ENCODE measurements at regions of chr5 and their contacts with region 1.

Region 1: GRCh38 chr5:119340597-119341218 is 15.1 kb upstream of the TNFAIP8 start:
- DNase-seq: peak; percentile 26 to 77 (median 61)
- H3K4me3 ChIP-seq: peak overlapping the region; percentile 54
- H3K4me3 Mint-ChIP-seq: peak overlapping the region; percentile 75 to 93 (median 83)
- H3K27ac ChIP-seq: peak overlapping the region; percentile 52
- H3K27ac Mint-ChIP-seq: peak overlapping the region; percentile 84 to 99 (median 94)
- H3K4me1 ChIP-seq: peaks cover 98% of the 10 kb centered on the region
- H3K4me1 Mint-ChIP-seq: peaks cover 95 to 98% (median 98%) of the 10 kb centered on the region in 3 donors
- H3K27me3 ChIP-seq: no peaks in the 10 kb centered on the region
- H3K27me3 Mint-ChIP-seq: no peaks in the 10 kb centered on the region

Region 2: DNA sequence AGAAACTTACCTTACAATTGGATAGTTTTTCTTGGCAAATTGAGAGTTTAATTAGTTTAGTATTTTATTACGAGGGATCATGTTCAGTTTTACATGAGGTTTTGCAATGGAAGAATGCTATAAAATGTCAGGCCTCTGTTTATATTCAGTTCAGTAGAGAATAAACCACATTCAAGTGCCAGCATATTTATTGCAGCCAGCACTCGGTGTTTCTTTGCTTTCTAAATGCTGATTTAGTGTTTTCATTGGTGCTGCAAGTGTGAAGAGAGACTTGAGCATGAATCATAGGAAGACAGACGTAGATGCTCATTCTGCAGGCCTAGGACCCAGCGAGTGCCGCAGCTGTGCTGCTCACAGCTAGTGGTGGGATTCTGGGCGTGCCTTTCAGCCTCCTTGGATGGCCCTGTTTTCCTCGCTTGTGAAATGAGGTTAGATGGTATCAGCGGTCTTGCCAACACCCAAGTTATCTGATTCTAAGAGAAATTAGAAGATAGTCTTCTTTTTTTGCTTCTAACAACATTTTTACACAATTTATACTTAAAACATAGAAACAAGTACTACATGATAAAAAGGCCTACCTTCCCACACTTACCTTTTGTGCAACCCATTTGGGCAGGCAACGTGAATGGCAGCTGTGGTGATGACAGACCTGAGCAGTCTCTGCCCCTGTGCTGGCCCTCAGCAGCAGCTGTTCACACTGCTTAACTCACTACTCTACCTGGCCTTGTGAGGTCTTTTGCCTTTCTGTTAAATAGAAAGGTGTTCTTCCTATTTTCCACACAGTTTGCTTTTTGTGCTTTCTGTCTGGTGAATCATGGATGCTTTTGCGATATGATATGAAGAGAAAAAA is 11.7 kb before region 1 on chr5:
- CTCF ChIA-PET with region 1: interaction called, 11 read pairs
- POLR2A ChIA-PET with region 1: interaction called, 20 read pairs
- DNase-seq: peak; percentile 58 to 81 (median 61)
- H3K4me3 ChIP-seq: peak overlapping the region; percentile 38
- H3K4me3 Mint-ChIP-seq: peak overlapping the region; percentile 55 to 84 (median 75)
- H3K27ac ChIP-seq: peak overlapping the region; percentile 62
- H3K27ac Mint-ChIP-seq: peak overlapping the region; percentile 82 to 99 (median 94)
- H3K4me1 ChIP-seq: peaks cover 96% of the 10 kb centered on the region
- H3K4me1 Mint-ChIP-seq: peaks cover 89 to 98% (median 97%) of the 10 kb centered on the region in 3 donors
- H3K27me3 ChIP-seq: no peaks in the 10 kb centered on the region
- H3K27me3 Mint-ChIP-seq: no peaks in the 10 kb centered on the region

Region 3: DNA sequence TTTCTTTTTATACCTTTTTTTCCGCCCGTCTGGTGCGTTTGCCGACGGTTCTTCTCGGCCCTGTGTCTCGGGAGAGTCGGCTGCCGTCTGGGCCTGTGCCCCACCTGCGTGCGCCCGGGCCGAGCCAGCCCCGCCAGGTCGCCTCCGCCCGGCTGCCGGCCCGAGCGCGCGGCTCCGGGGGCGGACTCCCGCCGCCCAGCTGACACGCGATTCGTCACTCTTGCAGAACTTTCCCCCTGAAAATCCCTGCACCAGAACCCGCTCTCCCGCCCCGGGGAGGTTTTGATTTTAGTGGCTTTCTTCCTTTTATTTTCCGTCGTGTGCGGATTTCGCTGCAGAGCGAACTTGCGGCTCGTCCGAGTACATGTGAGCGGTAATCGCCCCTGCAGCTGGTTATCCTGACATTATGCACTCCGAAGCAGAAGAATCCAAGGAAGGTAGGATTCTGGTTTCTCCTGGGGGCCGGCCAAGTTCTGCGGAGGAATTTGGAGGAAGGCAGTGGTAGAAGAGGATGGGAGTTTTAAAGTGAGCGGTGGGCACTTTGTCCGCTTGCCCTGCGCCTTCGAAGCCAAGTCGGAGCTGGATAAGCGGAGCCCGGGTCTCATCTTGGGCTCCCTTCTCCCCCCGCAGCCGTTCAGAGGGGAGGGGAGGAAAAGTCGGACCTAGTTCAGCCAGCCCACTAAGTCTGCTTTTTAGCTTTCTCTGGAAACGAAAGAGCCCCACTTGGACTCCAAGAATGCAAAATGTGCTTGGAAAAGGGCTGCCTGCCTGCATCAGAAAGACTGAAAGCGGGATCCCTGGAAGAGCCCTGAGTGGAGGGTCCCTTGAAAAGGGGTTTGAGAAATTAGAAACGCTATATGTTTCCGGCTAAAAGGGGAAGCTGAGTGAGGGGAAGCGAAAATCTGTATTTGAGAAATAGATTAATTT is 15.2 kb after region 1 on chr5 and contains the start of gene TNFAIP8:
- CTCF ChIA-PET with region 1: interaction called, 19 read pairs
- POLR2A ChIA-PET with region 1: interaction called, 7 read pairs
- DNase-seq: peak in 3 of 5 donors; percentile 38 to 53 (median 39)
- H3K4me3 ChIP-seq: peak within 1 kb of the TSS; percentile 37
- H3K4me3 Mint-ChIP-seq: peak within 1 kb of the TSS; percentile 81 to 95 (median 91)
- H3K27ac ChIP-seq: peak within 1 kb of the TSS; percentile 21
- H3K27ac Mint-ChIP-seq: peak within 1 kb of the TSS; percentile 76 to 95 (median 90)
- H3K4me1 ChIP-seq: peaks cover 88% of the 10 kb centered on the region
- H3K4me1 Mint-ChIP-seq: peaks cover 89 to 99% (median 98%) of the 10 kb centered on the region in 3 donors
- H3K27me3 ChIP-seq: no peaks in the 10 kb centered on the region
- H3K27me3 Mint-ChIP-seq: no peaks in the 10 kb centered on the region
- total RNA-seq, gene TNFAIP8: 295 to 311 TPM

Measured in CD8-positive, alpha-beta memory T cell (primary cell).